ENCODE measurements at regions of chr1 and their contacts with region 1.

Region 1: DNA sequence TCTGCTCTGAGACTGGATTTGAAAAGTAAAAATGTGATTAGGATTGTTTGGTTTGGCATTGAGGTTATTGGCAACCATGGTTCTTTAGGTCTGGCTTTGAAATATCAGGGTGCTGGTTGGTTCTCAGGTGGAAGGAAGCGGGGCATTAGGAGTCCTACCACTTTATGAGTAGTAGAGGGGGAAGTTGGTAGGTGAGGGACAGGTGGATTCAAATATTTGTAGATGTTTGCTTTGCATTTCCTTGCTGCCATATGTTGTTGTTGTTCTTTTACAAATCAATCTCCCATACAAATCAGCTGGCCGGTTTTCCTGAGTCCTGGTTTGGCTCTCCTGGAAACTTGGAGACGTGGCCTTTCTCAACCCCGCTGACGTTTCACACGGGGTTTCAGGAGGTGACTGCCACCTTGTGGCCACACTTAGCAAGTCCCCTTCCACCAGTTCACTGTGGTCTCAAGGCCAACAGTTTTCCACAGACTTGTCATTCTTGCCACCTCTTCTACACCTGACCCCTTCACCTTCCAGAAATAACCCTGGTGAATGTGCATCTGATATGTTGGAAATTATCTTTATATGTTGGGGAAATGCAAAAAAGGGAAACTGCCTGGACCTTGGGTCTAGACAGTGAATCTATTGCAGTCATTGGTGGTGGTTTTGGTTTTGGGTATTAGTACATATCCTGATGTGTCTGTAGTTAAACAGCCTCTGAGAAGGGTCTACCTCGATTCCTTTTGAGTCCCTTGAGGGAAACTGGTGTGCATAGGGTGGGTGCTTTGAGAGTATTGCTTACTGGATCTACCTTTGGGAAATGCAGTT is 127.0 kb upstream of the KIAA0040 start:
- DNase-seq: peak; percentile 73
- ATAC-seq: peak; percentile 85
- H3K4me3 Mint-ChIP-seq: no peak overlapping the region
- H3K27ac Mint-ChIP-seq: no peak overlapping the region
- H3K4me1 Mint-ChIP-seq: peaks cover 4% of the 10 kb centered on the region; the same call in 1 of the 2 replicates
- H3K27me3 Mint-ChIP-seq: no peaks in the 10 kb centered on the region
- CTCF ChIP-seq: peak; percentile 89

Region 2: GRCh38 chr1:175146529-175147213 is 173.0 kb before region 1 on chr1:
- CTCF ChIA-PET with region 1: interaction called, 158 read pairs
- POLR2A ChIA-PET with region 1: no interaction called
- DNase-seq: peak; percentile 91
- ATAC-seq: peak; percentile 96
- H3K4me3 Mint-ChIP-seq: no peak overlapping the region
- H3K27ac Mint-ChIP-seq: no peak overlapping the region
- H3K4me1 Mint-ChIP-seq: peaks cover 43% of the 10 kb centered on the region
- H3K27me3 Mint-ChIP-seq: peaks cover 27% of the 10 kb centered on the region
- CTCF ChIP-seq: peak; percentile 84

Region 3: DNA sequence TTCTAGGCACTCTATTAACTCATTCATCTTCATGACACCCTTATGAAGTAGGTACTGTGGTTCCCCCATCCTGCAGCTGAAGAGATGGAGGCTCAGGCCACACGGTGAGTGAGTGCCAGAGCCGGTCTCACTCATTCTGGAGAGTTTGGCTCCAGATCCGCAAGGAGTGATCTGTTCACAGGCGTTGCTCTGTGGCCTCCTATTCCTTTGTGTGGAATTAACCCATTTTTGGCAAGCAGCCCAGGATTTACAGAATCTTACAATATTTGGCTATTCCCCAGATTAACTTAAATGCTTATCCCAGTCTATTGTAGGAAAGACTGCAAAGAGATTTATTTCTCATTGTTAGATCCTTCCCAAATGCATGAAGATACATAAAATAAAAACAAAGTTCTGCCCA is 156.7 kb before region 1 on chr1:
- CTCF ChIA-PET with region 1: interaction called, 92 read pairs
- POLR2A ChIA-PET with region 1: no interaction called
- DNase-seq: no peak
- ATAC-seq: no peak
- H3K4me3 Mint-ChIP-seq: no peak overlapping the region
- H3K27ac Mint-ChIP-seq: no peak overlapping the region
- H3K4me1 Mint-ChIP-seq: no peaks in the 10 kb centered on the region
- H3K27me3 Mint-ChIP-seq: no peaks in the 10 kb centered on the region
- CTCF ChIP-seq: no peak

Region 4: DNA sequence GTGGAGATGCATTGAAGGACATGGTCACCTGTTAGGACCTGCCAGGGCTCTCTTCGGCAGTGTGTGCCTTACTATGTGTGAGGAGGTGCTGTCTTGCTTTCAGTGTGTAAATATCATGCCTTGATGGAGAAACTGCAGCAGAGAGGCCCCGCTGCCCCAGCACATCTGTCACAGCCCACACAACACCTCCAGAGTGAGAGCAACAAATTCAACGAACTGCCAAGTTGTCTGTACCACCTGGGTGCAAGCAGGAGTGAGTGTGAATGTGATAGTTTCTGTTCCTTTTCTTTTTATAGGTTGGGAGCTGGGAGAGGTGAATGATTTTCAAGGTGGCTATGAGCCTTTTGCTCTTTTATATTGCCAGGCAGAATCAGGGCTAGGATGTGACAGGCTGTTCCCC is 12.5 kb before region 1 on chr1:
- CTCF ChIA-PET with region 1: interaction called, 12 read pairs
- POLR2A ChIA-PET with region 1: no interaction called
- DNase-seq: no peak
- ATAC-seq: no peak
- H3K4me3 Mint-ChIP-seq: no peak overlapping the region
- H3K27ac Mint-ChIP-seq: no peak overlapping the region
- H3K4me1 Mint-ChIP-seq: peaks cover 8% of the 10 kb centered on the region
- H3K27me3 Mint-ChIP-seq: peaks cover 2% of the 10 kb centered on the region; the same call in 1 of the 2 replicates
- CTCF ChIP-seq: no peak

Region 5: DNA sequence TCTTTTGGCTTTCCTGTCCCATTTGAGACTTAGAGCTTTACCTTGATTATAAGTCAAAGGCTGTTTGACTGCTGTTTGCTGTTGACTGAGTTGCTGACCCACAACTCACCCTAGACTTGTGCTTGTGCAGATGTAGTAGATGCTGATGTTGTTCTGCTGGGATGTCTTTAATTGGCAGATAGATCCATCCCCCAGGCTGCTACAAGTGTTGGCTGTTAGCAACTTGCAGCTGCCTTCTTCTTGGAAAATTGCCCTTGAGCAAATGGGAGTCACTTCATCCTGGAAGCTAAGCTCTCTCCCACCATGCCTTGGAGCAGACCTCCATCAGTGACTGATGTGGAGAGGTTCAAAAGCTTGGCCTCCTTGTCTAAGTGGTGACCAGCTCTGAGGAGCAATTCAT is 12.3 kb after region 1 on chr1:
- CTCF ChIA-PET with region 1: interaction called, 12 read pairs
- POLR2A ChIA-PET with region 1: no interaction called
- DNase-seq: no peak
- ATAC-seq: no peak
- H3K4me3 Mint-ChIP-seq: no peak overlapping the region
- H3K27ac Mint-ChIP-seq: no peak overlapping the region
- H3K4me1 Mint-ChIP-seq: peaks cover 9% of the 10 kb centered on the region
- H3K27me3 Mint-ChIP-seq: no peaks in the 10 kb centered on the region; the same call in none of the 2 replicates
- CTCF ChIP-seq: no peak

Region 6: DNA sequence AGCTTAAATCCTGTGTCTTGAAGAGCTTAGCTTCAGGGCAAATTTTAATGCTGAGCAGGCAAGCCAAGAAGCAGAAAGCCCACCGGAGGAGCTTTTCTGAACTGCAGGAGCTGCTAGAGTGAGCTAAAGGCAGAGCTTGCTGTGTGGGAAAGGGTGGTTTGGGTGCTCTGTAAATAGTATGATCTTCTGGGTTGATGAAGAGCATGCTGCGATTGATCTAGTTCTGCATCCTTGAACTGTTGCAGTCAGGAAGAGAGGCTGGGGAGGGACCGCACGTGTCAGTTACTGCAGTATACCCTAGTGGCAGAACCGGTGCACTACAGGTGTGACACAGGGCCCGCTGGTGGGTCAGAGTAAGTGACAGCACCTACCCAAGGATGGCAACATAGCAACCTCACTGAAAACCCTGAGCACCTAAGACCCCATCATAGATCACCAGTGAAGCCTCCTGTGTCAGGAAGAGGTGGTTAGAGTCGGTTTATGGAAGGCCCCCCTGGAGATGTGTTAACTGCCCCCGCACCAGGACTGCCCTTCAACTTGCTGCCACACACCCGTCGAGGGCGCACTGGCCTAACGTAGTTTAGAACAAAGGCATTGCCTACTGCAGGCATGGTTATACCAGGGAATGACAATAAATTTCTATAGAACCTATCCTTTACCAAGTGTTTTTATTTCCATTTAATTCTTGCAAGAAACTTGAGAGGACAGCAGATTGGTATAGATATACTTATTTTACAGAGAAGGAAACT is 18.9 kb after region 1 on chr1:
- CTCF ChIA-PET with region 1: interaction called, 12 read pairs
- POLR2A ChIA-PET with region 1: no interaction called
- DNase-seq: peak; percentile 85
- ATAC-seq: peak; percentile 96
- H3K4me3 Mint-ChIP-seq: no peak overlapping the region
- H3K27ac Mint-ChIP-seq: no peak overlapping the region
- H3K4me1 Mint-ChIP-seq: peaks cover 28% of the 10 kb centered on the region
- H3K27me3 Mint-ChIP-seq: peaks cover 4% of the 10 kb centered on the region
- CTCF ChIP-seq: peak; percentile 84